ENCODE measurements at regions of chr1 and their contacts with region 1.

Region 1: GRCh38 chr1:59971464-59971911 is 44.9 kb upstream of the CYP2J2 start:
- DNase-seq: no peak
- H3K4me3 ChIP-seq: peak overlapping the region; percentile 23; the same call in 1 of the 2 replicates
- H3K27ac ChIP-seq: no peak overlapping the region
- H3K27me3 ChIP-seq: peaks cover 29% of the 10 kb centered on the region
- CTCF ChIP-seq: peak; percentile 87

Region 2: GRCh38 chr1:59947047-59947938 is 24.2 kb before region 1 on chr1:
- CTCF ChIA-PET with region 1: interaction called, 46 read pairs
- POLR2A ChIA-PET with region 1: interaction called, 5 read pairs
- DNase-seq: peak; percentile 29
- H3K4me3 ChIP-seq: no peak overlapping the region
- H3K27ac ChIP-seq: no peak overlapping the region
- H3K27me3 ChIP-seq: peaks cover 9% of the 10 kb centered on the region
- CTCF ChIP-seq: peak; percentile 98

Region 3: DNA sequence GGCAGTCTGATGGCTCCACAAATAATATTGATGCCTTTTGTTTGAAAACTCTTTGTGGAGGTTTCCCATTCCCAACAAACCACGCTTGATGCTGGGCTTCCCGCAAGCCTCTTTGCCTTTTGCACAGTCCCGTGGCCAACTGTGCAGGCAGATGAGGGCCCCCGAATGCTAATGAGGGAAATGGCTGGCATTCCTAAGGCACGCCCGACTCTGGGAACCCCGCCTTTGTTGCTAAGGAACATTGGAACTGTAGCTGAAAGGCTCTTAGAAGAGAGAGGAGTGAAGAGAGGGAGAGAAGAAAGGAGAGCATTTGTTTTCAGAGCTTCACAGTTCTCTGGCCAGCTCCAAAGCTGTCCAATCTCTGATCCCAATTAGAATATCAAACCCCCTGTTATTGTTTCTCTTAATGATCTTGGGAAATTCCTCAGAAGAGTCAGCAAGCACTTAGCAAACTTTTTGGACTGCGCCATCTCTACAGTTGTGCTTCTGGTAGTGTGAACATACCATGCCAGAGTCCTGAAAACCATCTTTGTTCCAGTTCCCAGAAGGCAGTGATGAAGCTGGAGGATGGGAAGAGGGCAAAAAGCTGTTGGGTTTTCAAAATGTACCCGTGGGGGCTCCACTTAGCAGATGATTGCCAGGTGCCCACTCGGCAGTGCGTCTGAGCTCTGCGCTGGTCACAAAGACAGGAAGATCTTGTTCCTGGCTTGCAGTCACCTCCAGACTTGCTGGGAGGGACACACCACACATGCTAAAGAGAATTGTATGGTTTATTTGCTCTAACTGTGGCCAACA is 15.2 kb after region 1 on chr1:
- CTCF ChIA-PET with region 1: interaction called, 33 read pairs
- POLR2A ChIA-PET with region 1: no interaction called
- DNase-seq: no peak
- H3K4me3 ChIP-seq: no peak overlapping the region
- H3K27ac ChIP-seq: no peak overlapping the region
- H3K27me3 ChIP-seq: no peaks in the 10 kb centered on the region
- CTCF ChIP-seq: no peak

Region 4: GRCh38 chr1:60008500-60008899 is 37.0 kb after region 1 on chr1:
- CTCF ChIA-PET with region 1: interaction called, 16 read pairs
- POLR2A ChIA-PET with region 1: no interaction called
- DNase-seq: no peak
- H3K4me3 ChIP-seq: no peak overlapping the region
- H3K27ac ChIP-seq: no peak overlapping the region
- H3K27me3 ChIP-seq: no peaks in the 10 kb centered on the region
- CTCF ChIP-seq: no peak

Region 5: DNA sequence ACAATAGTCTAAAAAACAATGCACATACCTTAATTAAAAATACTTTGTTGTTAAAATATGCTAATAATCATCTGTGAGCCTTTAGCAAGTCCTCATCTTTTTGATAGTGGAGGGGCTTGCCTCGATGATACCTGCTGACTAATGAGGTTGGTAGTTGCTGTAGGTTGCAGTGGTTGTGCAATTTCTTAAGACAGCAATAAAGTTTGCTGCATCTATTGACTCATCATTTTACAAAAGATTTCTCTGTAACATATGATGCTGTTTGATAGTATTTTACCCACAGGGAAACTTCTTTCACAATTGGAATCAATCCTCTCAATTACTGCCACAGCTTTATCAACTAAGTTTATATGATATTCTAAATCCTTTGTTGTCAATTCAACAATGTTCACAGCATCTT is 94.5 kb after region 1 on chr1:
- CTCF ChIA-PET with region 1: interaction called, 12 read pairs
- POLR2A ChIA-PET with region 1: no interaction called
- DNase-seq: no peak
- H3K4me3 ChIP-seq: no peak overlapping the region
- H3K27ac ChIP-seq: no peak overlapping the region
- H3K27me3 ChIP-seq: no peaks in the 10 kb centered on the region
- CTCF ChIP-seq: no peak

Region 6: GRCh38 chr1:60765204-60765603 is 793.7 kb after region 1 on chr1:
- CTCF ChIA-PET with region 1: interaction called, 19 read pairs
- POLR2A ChIA-PET with region 1: no interaction called
- DNase-seq: no peak
- H3K4me3 ChIP-seq: no peak overlapping the region
- H3K27ac ChIP-seq: no peak overlapping the region
- H3K27me3 ChIP-seq: no peaks in the 10 kb centered on the region
- CTCF ChIP-seq: peak; percentile 47

Region 7: DNA sequence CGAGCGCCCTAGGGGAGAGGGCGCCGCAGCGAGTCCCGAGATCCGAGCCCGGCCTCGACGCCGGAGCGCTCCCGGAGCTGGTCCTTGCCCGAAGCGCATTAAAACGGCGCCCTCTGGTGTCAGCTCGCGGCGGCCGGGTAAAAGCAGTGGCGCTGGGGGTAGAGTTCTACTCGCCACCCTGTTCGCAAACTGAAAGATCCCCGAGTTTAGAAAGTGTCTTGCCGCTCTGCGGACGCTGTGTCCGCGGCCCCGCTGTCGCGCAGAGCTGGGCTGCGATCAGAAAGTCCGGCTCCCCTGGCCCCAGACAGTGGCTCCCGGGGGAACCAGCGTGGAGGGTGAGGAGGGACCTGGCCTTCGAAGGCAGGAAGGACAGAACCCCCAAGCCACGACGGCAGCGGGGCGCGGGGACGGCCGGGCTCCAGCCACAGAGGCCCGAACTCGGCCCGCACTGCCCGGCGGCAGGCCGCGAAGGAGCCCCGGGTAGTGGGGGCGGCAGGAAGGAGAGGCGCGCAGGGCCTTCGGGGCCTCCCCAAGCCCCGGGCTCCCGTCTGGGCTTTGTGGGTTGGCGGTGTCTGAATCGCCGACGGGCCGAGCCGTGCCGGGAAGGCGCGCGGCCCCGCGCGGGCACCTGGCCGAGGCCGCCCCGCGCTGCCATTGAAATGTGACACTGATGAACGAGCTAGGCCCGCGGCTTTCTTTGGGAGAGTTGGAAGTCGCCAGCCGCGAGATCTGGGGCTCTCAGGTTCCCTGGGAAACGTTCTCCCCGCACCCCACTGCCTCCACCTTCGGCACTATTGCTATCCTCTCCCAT is 1071.7 kb after region 1 on chr1:
- CTCF ChIA-PET with region 1: interaction called, 20 read pairs
- POLR2A ChIA-PET with region 1: no interaction called
- DNase-seq: peak; percentile 23
- H3K4me3 ChIP-seq: peak overlapping the region; percentile 47
- H3K27ac ChIP-seq: no peak overlapping the region
- H3K27me3 ChIP-seq: peaks cover 25% of the 10 kb centered on the region
- CTCF ChIP-seq: peak; percentile 81